Activated CD8-positive, alpha-beta memory T cell treated with anti-CD3 and anti-CD28 coated beads, Interleukin-2, amount 10 ng/mL, durations not matched to agents 7 days and 5 days (primary cell): ENCODE measurements at regions of chr1 and their contacts with region 1.

Region 1: GRCh38 chr1:65459397-65459768 is 38.9 kb downstream of the LEPR start:
- DNase-seq: no peak
- ATAC-seq: peak; percentile 73
- H3K4me3 Mint-ChIP-seq: no peak overlapping the region
- H3K27ac Mint-ChIP-seq: no peak overlapping the region
- H3K4me1 Mint-ChIP-seq: peaks cover 22% of the 10 kb centered on the region
- H3K27me3 Mint-ChIP-seq: peaks cover 4% of the 10 kb centered on the region

Region 2: GRCh38 chr1:65230731-65231481 is 228.5 kb before region 1 on chr1:
- CTCF ChIA-PET with region 1: interaction called, 21 read pairs
- DNase-seq: peak; percentile 58
- ATAC-seq: peak; percentile 82
- H3K4me3 Mint-ChIP-seq: no peak overlapping the region
- H3K27ac Mint-ChIP-seq: peak overlapping the region; percentile 65
- H3K4me1 Mint-ChIP-seq: peaks cover 34% of the 10 kb centered on the region
- H3K27me3 Mint-ChIP-seq: no peaks in the 10 kb centered on the region

Region 3: GRCh38 chr1:65431111-65431705 is 28.2 kb before region 1 on chr1:
- CTCF ChIA-PET with region 1: interaction called, 23 read pairs
- DNase-seq: no peak
- ATAC-seq: no peak
- H3K4me3 Mint-ChIP-seq: no peak overlapping the region
- H3K27ac Mint-ChIP-seq: no peak overlapping the region
- H3K4me1 Mint-ChIP-seq: peaks cover 20% of the 10 kb centered on the region
- H3K27me3 Mint-ChIP-seq: no peaks in the 10 kb centered on the region